Heart left ventricle (tissue), 16 donors: ENCODE measurements at regions of chr17 and their contacts with region 1.

Region 1: GRCh38 chr17:76714822-76715495 is 4.2 kb upstream of the MXRA7 start:
- DNase-seq: peak; percentile 59 to 80 (median 70)
- ATAC-seq: peak in 1 of 4 donors; percentile 2
- H3K4me3 ChIP-seq: no peak overlapping the region
- H3K27ac ChIP-seq: peak overlapping the region in 11 of 12 donors; percentile 14 to 92 (median 65)
- H3K4me1 ChIP-seq: peaks cover 12 to 63% (median 46%) of the 10 kb centered on the region in 12 donors
- H3K27me3 ChIP-seq: no peaks in the 10 kb centered on the region
- CTCF ChIP-seq: peak; percentile 80 to 93 (median 86)
- POLR2A ChIP-seq: no peak

Region 2: DNA sequence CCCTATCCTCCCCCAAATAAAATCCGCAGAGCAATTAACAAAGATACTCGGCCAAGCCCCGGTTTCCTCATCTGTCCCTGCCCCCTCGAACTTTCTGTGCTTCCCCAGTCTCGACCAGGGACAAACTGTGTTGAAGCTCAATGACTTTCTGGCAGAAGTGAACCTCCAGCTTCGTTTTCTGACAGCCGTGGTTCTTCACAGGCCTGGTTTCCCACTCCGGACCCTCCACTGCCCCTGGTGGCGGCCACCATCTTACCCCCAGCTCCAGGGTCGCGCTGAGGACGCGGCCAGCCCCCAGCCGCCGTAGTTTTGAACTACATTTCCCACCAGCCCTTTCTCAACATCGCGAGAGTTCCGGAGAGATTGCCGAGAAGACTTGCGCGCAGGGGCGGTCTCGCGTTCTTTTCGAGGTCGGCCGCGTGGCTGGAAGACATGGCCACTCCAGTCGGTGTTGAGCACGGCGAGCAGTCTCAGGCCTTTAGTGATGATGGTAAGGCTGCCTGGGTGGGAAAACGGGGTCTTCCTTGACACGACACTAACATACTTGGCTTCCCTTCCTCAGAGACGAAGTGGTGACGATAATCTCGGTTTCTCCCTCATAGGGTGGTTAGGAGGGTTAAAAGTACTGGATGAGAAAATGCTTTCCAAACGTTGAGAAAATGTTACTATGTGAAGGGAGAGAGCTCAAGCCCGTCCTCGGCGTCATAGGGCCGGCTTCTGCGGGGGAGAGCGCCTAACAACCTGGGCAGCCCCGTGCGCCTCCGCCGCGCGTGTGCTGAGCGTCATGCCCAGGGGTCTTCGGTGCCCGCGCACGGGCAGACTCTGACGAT is 157.4 kb before region 1 on chr17:
- intact Hi-C with region 1: loop called in 7 of 10 experiments (anchors 5 to 10 kb)
- DNase-seq: peak; percentile 94 to 96 (median 95)
- ATAC-seq: peak; percentile 76 to 92 (median 92)
- H3K4me3 ChIP-seq: peak overlapping the region; percentile 54 to 88 (median 73)
- H3K27ac ChIP-seq: peak overlapping the region; percentile 74 to 95 (median 84)
- H3K4me1 ChIP-seq: peaks cover 5 to 61% (median 48%) of the 10 kb centered on the region in 12 donors
- H3K27me3 ChIP-seq: no peaks in the 10 kb centered on the region
- CTCF ChIP-seq: peak; percentile 33 to 70 (median 49)
- POLR2A ChIP-seq: peak in 1 of 2 donors; percentile 77

Region 3: DNA sequence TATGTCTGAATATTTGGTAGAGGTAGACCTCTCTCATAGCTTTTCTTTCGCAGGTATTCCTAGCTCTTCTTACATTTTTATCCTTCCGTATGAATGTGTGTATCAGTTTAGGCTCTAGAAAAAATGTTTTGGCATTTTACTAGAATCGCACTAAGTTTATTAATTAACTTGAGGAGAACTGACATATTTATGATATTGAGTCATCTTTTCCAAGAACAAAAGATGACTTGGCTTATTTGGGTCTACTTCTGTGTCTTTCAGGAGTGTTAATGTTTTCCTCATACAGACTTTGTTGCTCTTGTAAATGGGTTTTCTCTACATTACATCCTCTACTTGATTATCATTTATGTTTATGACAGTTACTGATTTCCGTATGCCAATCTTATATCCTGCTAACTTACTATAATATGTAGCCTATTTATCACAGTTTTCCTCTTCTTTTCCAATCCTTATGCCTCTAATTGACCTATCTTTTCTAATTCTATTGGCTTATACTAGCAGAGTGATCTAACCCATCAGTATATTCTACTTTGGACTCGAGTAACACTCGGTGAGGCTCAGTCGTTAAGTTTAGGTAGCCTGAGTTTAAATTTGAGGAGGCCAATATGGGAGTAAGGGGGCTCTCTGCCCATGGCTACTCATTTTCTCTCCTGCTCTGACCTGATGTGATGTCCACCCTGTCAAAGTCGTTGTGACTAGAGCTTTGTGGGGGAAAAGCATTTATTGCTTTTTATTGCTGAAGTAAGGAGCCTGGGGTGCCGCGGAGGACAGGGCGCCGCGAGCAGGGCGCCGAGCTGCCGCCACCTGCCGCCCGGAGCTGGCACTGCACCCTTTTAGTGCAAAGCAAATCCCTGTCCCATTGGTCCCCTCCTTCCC is 91.5 kb before region 1 on chr17:
- intact Hi-C with region 1: loop called in 2 of 10 experiments (anchors 10 kb)
- DNase-seq: peak; percentile 61 to 90 (median 72)
- ATAC-seq: peak; percentile 47 to 95 (median 90)
- H3K4me3 ChIP-seq: no peak overlapping the region
- H3K27ac ChIP-seq: no peak overlapping the region
- H3K4me1 ChIP-seq: peaks cover 0 to 7% (median 0%) of the 10 kb centered on the region in 12 donors
- H3K27me3 ChIP-seq: no peaks in the 10 kb centered on the region
- CTCF ChIP-seq: peak; percentile 93 to 98 (median 96)
- POLR2A ChIP-seq: no peak

Region 4: DNA sequence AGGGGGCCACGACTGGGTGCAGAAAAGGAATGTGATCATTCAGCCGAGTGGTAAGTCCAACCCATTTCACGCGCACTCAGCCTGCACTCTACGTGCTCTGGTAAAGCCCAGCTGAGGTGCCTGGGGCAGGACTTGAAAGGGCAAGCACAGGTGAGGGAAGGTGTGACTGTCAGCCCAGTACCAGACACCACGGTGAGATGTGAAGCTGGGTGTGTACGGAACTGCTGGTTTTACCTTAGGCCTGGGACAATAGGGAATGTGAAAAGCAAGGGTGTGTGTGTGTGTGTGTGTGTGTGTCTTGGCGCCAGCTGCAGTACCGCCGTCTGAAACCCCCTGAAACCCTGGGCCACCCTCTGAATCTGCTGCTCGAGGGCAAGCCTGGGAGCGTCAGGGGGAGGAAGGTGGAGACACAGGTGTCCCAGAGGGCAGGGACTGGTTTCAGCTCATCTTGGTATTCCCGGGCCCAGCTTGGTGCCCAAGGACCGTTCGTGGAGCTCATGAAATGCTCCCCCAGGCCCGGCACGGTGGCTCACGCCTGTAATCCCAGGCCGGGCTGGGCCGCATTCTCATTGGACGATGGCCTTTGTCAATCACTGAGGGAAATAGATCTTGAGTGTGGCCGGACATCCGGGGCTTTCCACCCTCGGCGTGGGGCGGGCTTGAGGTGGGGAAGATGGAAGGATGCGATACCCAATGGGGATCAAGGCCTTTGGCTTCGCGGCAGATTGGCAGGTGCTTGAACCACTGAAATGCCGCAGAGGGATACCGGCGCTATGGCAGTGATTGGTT is 43.6 kb before region 1 on chr17:
- intact Hi-C with region 1: loop called in 6 of 10 experiments (anchors 5 to 10 kb)
- DNase-seq: peak; percentile 100
- ATAC-seq: peak; percentile 98 to 99 (median 98)
- H3K4me3 ChIP-seq: peak overlapping the region; percentile 46 to 79 (median 69)
- H3K27ac ChIP-seq: peak overlapping the region; percentile 47 to 95 (median 90)
- H3K4me1 ChIP-seq: peaks cover 0 to 26% (median 14%) of the 10 kb centered on the region in 12 donors
- H3K27me3 ChIP-seq: no peaks in the 10 kb centered on the region
- CTCF ChIP-seq: no peak
- POLR2A ChIP-seq: no peak

Region 5: DNA sequence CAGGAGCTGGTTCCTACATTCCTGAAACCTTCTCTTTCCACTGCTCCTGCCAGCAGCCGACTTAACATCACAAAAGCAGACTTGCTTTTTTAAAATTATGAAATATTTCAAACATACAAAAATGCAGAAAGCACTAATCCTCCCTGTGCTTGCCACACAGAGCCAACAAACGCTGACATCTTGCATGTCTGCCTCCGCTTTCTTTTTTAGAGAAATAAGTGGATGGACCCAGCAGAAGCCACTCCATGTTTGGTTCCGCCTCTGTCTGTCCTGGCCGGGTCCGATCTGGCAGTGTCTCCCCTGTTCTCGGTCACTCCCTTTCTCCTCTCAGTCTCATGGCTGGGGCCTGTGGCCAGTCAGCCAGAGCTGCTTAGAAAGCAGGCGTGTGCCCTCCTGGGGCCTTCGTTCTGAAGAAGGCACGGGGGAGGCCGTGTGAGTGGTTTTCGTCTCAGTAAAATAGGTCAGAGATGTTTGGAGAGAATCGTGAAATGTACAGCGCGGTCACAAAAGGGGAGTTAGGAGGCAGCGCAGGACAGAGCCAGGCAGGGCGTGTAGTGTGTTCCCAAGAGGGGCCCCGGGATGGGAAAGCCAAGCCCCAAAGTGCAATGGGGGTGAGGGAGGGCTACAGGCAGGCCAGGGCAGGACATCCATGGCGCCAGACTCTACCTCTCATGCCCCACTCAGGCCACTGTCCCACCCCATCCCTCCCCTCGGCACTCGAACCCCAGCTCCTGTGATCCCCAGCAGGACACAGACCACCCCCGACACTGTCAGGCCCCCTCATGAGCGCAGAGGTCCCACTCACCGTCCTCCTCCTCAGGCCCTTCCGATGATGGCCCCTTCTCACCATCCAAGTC is 27.4 kb before region 1 on chr17:
- intact Hi-C with region 1: loop called in 7 of 10 experiments (anchors 2 to 5 kb)
- DNase-seq: peak; percentile 61 to 86 (median 78)
- ATAC-seq: peak; percentile 9 to 52 (median 43)
- H3K4me3 ChIP-seq: no peak overlapping the region
- H3K27ac ChIP-seq: peak overlapping the region; percentile 86 to 99 (median 93)
- H3K4me1 ChIP-seq: peaks cover 21 to 100% (median 90%) of the 10 kb centered on the region in 12 donors
- H3K27me3 ChIP-seq: no peaks in the 10 kb centered on the region
- CTCF ChIP-seq: no peak
- POLR2A ChIP-seq: no peak